Astrocyte of the cerebellum (primary cell): ENCODE measurements at regions of chr14 and their contacts with region 1.

Region 1: GRCh38 chr14:103808403-103809001 is 38.9 kb downstream of the PPP1R13B start:
- DNase-seq: peak; percentile 64
- H3K4me3 ChIP-seq: no peak overlapping the region
- CTCF ChIP-seq: peak; percentile 92

Region 2: DNA sequence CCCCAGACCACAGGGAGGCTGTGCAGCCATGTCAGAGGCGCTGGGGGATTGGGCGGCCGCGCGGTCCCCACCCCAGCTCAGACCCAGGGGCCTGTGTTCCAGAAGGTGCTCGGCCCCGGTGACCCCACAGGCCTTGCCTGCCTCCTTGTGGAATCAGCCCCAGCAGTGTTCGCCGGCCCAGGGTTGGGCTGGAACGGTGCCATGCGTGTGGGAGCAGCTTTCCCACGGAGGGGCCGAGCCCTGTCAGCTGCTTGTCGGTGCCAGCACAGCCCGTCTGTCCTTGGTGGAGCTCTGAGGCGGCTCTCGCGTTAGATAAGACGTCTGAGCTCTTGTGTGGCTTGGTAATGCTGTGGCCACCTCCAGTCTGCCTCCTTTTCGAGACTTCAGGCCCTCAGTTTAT is 84.4 kb before region 1 on chr14:
- in situ Hi-C with region 1: no loop called
- DNase-seq: no peak
- H3K4me3 ChIP-seq: no peak overlapping the region
- CTCF ChIP-seq: no peak

Region 3: GRCh38 chr14:103904493-103905107 is 96.1 kb after region 1 on chr14:
- in situ Hi-C with region 1: loop called (anchors 5 kb)
- DNase-seq: no peak
- H3K4me3 ChIP-seq: no peak overlapping the region
- CTCF ChIP-seq: no peak